GM12878 (cell line): ENCODE measurements at regions of chr2 and their contacts with region 1.

Region 1: DNA sequence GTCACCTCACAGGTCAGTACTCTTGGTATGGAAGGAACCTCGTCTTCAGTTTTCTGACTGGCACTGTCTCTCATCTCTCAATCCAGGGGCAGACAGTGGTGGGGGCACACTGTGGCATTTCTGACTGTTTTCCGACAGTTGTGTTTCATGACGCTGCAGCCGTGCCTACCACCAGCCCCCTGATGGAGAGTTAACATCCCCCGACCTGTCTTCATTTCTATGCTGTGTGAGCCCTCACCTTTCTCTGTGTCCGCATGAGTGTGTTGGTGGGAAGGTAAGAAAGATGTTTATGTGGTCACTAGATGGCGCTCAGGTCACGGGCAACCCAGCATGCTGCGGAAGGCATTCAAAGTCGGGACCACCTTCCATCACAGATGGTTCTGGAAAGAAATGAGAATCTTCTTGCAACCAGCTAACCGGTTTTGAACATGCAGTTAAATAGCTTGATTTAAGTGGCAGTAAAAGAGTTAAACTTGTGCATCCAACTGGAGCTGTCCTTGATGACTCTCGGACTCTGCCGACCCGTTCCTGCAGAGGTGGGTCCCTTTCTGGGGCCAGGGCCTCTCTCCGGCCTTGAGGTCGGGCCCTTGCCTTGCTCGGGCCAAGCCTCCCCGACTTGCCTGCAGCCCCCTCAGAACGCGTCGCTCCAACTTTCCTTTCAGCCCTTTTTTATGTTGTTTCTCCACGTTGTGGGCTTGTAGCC is 92.4 kb downstream of the DYSF start:
- DNase-seq: no peak
- ATAC-seq: peak; percentile 94
- H3K4me3 ChIP-seq: no peak overlapping the region
- H3K27ac ChIP-seq: no peak overlapping the region
- H3K4me1 ChIP-seq: no peaks in the 10 kb centered on the region
- H3K27me3 ChIP-seq: peaks cover 0 to 4% of the 10 kb centered on the region in 2 experiments; a peak in 2 of 4 replicates
- CTCF ChIP-seq: peak; percentile 59 to 86 (median 80)
- EP300 ChIP-seq: no peak
- POLR2A ChIP-seq: no peak
- RAD21 ChIP-seq: peak; percentile 78

Region 2: GRCh38 chr2:71516253-71516888 is 29.4 kb before region 1 on chr2:
- CTCF ChIA-PET with region 1: no interaction called
- POLR2A ChIA-PET with region 1: no interaction called
- RAD21 ChIA-PET with region 1: no interaction called
- SMC1A ChIA-PET with region 1: no interaction called
- in situ Hi-C with region 1: no loop called
- intact Hi-C with region 1: no loop called
- DNase-seq: no peak
- ATAC-seq: no peak
- H3K4me3 ChIP-seq: no peak overlapping the region
- H3K27ac ChIP-seq: no peak overlapping the region
- H3K4me1 ChIP-seq: no peaks in the 10 kb centered on the region
- H3K27me3 ChIP-seq: peaks cover 0 to 6% of the 10 kb centered on the region in 2 experiments; a peak in 3 of 4 replicates
- CTCF ChIP-seq: no peak
- EP300 ChIP-seq: no peak
- POLR2A ChIP-seq: no peak
- RAD21 ChIP-seq: no peak

Region 3: DNA sequence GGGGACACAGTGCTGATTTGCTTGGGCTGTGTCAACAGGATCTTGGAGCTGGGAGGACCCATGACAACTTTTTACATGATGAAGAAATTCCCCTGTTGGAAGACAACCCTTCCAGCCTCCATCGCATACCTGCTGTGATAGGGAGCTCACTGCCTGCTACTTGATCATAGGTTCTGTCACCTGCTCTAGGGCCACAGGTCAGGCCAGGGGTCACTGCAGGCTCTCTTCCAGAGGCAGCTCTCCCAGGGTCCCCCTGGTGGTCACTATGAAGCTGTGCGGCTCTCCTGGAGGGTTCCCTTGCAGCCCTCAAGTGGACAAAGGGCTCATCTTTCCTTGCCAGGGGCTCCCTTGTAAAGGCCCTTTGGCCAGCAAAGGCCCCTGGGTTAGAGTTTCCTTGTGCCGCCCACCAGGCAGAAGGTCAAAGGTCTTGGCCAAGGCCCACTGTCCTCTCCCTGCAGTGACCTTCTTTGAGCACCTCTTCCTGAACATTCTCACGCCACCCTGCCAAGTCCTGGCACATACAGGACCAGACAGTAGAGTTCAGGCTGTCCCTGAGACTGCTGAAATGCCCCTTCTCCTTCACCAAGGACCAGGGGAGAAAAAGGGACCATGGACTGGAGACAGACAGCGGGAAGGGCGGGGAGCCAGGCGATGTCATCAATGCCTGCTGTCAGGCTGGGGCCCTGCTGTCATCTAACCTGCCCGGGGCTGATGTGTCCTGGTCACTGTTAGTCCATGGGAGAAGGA is 252.7 kb after region 1 on chr2:
- CTCF ChIA-PET with region 1: interaction called, 7 read pairs
- POLR2A ChIA-PET with region 1: no interaction called
- RAD21 ChIA-PET with region 1: no interaction called
- SMC1A ChIA-PET with region 1: no interaction called
- in situ Hi-C with region 1: no loop called
- intact Hi-C with region 1: loop called (anchors 1 kb)
- DNase-seq: no peak
- ATAC-seq: peak; percentile 89
- H3K4me3 ChIP-seq: no peak overlapping the region
- H3K27ac ChIP-seq: no peak overlapping the region
- H3K4me1 ChIP-seq: no peaks in the 10 kb centered on the region
- H3K27me3 ChIP-seq: no peaks in the 10 kb centered on the region; a peak in 1 of 4 replicates
- CTCF ChIP-seq: peak; percentile 41 to 66 (median 62)
- EP300 ChIP-seq: no peak
- POLR2A ChIP-seq: no peak
- RAD21 ChIP-seq: 0 out of 2 replicates have a peak, but pooled peaks have one; percentile 22

Region 4: GRCh38 chr2:72137498-72138010 is 591.8 kb after region 1 on chr2:
- CTCF ChIA-PET with region 1: interaction called, 4 read pairs
- POLR2A ChIA-PET with region 1: no interaction called
- RAD21 ChIA-PET with region 1: no interaction called
- SMC1A ChIA-PET with region 1: no interaction called
- in situ Hi-C with region 1: no loop called
- intact Hi-C with region 1: loop called (anchors 5 kb)
- DNase-seq: no peak
- ATAC-seq: peak; percentile 98
- H3K4me3 ChIP-seq: no peak overlapping the region
- H3K27ac ChIP-seq: no peak overlapping the region
- H3K4me1 ChIP-seq: no peaks in the 10 kb centered on the region
- H3K27me3 ChIP-seq: no peaks in the 10 kb centered on the region
- CTCF ChIP-seq: peak; percentile 89 to 94 (median 93)
- EP300 ChIP-seq: no peak
- POLR2A ChIP-seq: no peak
- RAD21 ChIP-seq: peak; percentile 60

Region 5: DNA sequence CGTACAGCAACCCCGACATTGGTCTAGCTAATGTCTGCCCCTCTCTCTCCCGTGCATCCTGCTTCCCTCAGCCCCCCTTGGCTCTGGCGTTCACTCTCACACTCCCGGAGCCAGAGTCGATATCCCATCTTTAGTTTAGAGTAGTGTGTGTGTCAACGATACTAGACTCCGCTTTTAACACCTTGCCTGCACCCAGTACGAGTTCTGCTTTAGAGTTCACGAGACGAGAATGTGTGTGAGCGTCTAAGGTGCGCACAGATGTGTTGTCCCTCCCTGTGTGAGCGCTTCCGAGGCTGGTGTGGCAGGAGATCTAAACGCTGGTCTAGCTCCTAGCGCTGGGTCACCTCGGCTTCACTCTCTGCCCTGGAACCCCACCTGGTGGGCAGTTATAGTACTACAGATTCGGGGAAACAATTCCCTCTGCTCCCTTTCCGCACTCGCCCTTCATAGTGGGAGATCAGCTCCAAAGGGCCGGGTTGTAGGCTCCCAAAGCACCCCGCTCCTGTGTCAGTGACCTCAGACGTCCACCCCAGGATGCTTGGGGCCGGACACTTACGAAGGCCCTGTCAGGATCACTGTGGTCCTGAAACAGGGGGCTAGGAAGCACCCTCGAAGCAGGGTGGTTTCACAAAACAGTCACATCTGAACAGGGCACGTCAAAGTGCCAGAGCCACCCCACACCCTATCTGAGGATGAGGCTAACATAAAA is 604.6 kb after region 1 on chr2:
- CTCF ChIA-PET with region 1: interaction called, 3 read pairs
- POLR2A ChIA-PET with region 1: no interaction called
- RAD21 ChIA-PET with region 1: interaction called, 3 read pairs
- SMC1A ChIA-PET with region 1: no interaction called
- in situ Hi-C with region 1: loop called (anchors 5 kb)
- intact Hi-C with region 1: loop called (anchors 2 kb)
- DNase-seq: peak; percentile 5
- ATAC-seq: peak; percentile 92
- H3K4me3 ChIP-seq: no peak overlapping the region
- H3K27ac ChIP-seq: no peak overlapping the region
- H3K4me1 ChIP-seq: no peaks in the 10 kb centered on the region
- H3K27me3 ChIP-seq: peaks cover 14% of the 10 kb centered on the region in 2 experiments; a peak in 3 of 4 replicates
- CTCF ChIP-seq: peak; percentile 68 to 77 (median 73)
- EP300 ChIP-seq: no peak
- POLR2A ChIP-seq: no peak
- RAD21 ChIP-seq: peak; percentile 73

Region 6: DNA sequence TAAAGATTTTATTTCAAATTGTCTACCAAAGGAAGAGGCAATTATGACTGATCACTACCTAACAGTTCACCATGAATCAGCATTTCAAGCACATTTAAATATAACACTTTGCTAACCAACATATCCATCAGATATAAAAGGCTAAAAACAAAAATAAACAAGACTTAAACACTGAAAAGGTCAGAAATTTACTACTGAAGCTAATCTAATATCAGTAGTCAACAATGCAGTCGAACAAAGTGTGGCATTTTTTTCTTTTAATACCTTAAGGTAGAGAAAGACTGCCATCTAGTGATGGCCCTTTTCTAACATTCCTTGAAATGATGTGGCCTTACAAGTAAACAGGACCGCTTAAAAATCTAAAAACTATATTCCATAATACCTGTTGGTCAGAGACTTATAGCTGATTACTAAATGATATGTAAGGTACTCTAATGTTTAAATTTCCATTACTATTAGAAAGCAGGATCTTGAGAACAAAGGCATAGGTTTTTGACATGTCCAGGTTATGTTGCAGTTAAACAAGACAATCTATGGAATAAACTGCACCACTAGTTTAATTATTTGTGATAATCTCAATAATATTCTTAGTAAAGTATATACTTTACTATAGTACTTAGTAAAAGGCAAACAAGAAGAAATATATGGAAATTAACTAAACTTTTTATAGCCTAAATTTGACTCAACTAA is 1200.1 kb after region 1 on chr2:
- CTCF ChIA-PET with region 1: interaction called, 3 read pairs
- POLR2A ChIA-PET with region 1: no interaction called
- RAD21 ChIA-PET with region 1: no interaction called
- SMC1A ChIA-PET with region 1: no interaction called
- in situ Hi-C with region 1: no loop called
- intact Hi-C with region 1: loop called (anchors 2 kb)
- DNase-seq: no peak
- ATAC-seq: peak; percentile 52; the same call in 2 of the 3 replicates
- H3K4me3 ChIP-seq: no peak overlapping the region
- H3K27ac ChIP-seq: no peak overlapping the region
- H3K4me1 ChIP-seq: no peaks in the 10 kb centered on the region
- H3K27me3 ChIP-seq: no peaks in the 10 kb centered on the region
- CTCF ChIP-seq: peak; percentile 50 to 62 (median 58); a peak in 5 of 6 replicates
- EP300 ChIP-seq: no peak
- POLR2A ChIP-seq: no peak
- RAD21 ChIP-seq: peak; percentile 70